ENCODE measurements at regions of chr10 and their contacts with region 1.

Region 1: DNA sequence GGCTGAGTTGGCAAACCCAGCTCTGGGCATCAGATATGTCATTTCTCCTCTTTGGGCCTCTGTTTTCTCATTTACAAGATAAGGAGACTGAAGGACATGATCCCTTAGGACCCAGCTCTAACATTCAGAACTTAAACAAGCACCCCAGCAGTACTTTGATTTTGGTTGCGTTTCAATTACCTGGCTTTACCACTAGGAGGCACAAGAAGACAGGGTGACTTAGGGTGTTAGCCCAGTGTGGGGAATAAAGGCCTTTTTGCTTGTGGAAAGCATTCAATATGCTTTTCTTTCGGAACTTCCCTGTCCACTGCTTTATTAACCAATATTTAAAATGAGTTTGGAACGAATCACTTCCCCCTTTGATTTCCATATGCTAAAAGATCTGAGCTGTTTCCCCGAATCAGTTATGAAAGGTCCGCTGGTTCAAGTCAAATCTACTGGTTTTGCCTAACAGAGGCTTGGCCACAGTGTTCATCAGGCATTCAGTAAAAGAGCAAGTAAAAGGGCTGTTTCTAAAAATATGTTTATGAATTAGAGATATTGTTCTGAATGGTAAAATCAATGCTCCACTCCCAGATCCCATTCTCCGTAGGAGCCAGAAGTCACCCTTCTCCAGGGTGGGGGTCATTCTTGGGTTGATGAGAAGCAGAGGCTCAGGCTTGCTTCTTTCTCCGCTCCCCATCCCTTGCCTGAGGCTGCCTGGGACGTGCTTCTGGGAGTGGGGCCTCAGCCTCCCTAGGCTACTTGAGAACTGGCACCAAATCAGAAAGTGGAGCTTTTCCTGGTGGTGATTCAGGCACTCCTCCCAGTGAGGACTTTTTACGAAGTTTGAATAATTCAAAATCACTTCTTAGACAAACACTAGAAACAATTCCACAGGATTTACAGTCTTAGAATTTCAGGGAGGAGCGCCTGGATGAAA is 105.5 kb downstream of the MYOF start:
- DNase-seq: peak; percentile 88
- H3K4me3 Mint-ChIP-seq: peak overlapping the region; percentile 55
- H3K27ac Mint-ChIP-seq: peak overlapping the region; percentile 87
- H3K4me1 Mint-ChIP-seq: peaks cover 40% of the 10 kb centered on the region
- H3K27me3 Mint-ChIP-seq: no peaks in the 10 kb centered on the region
- CTCF ChIP-seq: peak; percentile 85

Region 2: DNA sequence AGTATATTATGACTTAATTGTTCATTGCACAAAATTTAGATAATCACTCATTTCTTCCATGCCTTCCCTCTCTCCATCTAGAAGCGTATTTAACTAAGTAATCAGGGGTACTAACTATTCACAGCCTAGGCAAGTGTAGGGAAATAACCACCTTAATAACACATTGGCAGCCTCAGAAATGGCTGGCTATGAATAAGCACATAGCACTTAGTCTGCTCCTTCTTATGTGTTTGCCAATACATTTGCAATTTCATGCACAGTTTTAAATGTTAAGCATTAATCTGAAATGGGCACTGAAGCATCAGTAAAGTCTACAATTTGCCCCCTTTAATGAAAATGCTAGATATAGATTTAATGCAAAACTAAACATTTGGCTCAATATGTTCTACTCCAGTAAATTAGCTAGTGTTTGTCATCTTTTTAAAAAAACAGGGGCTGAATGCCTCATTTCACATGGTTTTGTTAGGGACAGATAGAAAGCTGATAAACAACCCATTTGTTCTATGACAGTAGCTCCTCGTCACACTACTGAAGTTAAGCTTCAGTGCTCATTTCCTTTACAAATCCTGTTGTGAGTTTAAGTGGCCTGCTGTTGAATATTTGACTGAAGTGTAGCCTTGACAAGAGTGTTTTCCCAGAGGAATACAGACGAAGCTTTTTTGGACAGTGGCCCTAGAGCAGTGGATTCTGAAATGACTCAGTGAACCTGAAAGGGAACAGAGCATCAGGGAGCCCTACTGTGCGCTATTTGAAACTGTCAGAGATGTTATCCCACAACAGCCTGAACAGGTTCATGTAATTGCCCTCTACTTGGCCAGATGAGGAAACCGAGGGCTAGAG is 656.4 kb before region 1 on chr10:
- CTCF ChIA-PET with region 1: no interaction called
- POLR2A ChIA-PET with region 1: no interaction called
- intact Hi-C with region 1: no loop called
- DNase-seq: no peak
- H3K4me3 Mint-ChIP-seq: no peak overlapping the region
- H3K27ac Mint-ChIP-seq: no peak overlapping the region
- H3K4me1 Mint-ChIP-seq: no peaks in the 10 kb centered on the region
- H3K27me3 Mint-ChIP-seq: no peaks in the 10 kb centered on the region
- CTCF ChIP-seq: no peak

Region 3: GRCh38 chr10:93352638-93353383 is 23.8 kb before region 1 on chr10:
- CTCF ChIA-PET with region 1: interaction called, 37 read pairs
- POLR2A ChIA-PET with region 1: no interaction called
- intact Hi-C with region 1: no loop called
- DNase-seq: peak; percentile 46
- H3K4me3 Mint-ChIP-seq: no peak overlapping the region
- H3K27ac Mint-ChIP-seq: no peak overlapping the region
- H3K4me1 Mint-ChIP-seq: no peaks in the 10 kb centered on the region
- H3K27me3 Mint-ChIP-seq: no peaks in the 10 kb centered on the region
- CTCF ChIP-seq: peak; percentile 51

Region 4: DNA sequence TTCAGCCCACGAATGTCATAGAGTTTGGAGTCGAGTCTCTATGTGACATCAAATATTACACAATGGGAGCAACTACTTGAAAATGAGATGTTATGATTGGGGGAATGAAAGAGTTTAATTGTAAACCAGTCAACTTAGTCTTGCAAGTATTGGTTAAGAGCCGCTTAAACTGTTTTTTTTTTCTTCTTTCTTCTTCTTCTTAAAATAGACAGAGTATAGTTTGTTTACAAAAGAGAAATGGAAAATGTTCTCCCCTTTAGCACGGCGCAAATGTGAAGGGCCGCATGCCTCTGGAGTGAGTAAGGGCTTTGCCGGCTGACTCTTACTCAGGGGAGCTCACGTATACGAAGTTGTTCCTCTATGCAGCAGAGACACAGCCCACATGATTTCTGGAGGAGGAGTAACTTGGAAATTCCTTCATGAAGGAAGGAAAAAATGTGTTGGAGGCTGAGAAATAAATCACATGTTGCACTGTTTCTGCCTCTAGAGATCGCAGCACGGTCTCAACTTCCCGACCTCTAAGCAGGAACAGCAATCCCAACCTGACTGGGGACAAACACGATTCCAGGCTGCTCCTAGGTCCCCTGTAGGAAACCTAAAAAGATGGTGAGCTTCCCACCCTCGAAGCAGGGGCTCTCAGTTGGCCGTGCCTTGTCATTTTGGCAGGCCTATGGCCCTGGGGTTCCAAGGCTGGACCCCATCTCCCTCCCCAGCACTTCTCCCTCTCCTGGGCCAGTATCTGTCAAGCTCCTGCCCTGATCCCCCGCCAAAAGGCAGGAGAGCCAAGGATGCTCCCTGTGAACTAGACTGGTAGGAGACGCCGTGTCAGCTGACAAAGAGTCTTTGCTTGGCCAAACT is 60.7 kb after region 1 on chr10:
- CTCF ChIA-PET with region 1: interaction called, 102 read pairs
- POLR2A ChIA-PET with region 1: interaction called, 49 read pairs
- intact Hi-C with region 1: loop called (anchors 1 kb)
- DNase-seq: peak; percentile 96
- H3K4me3 Mint-ChIP-seq: peak overlapping the region; percentile 70
- H3K27ac Mint-ChIP-seq: peak overlapping the region; percentile 98
- H3K4me1 Mint-ChIP-seq: peaks cover 65% of the 10 kb centered on the region
- H3K27me3 Mint-ChIP-seq: no peaks in the 10 kb centered on the region
- CTCF ChIP-seq: no peak

Region 5: GRCh38 chr10:93471110-93471651 is 94.5 kb after region 1 on chr10:
- CTCF ChIA-PET with region 1: interaction called, 74 read pairs
- POLR2A ChIA-PET with region 1: interaction called, 93 read pairs
- intact Hi-C with region 1: no loop called
- DNase-seq: peak; percentile 87
- H3K4me3 Mint-ChIP-seq: peak overlapping the region; percentile 44
- H3K27ac Mint-ChIP-seq: peak overlapping the region; percentile 85
- H3K4me1 Mint-ChIP-seq: peaks cover 50% of the 10 kb centered on the region
- H3K27me3 Mint-ChIP-seq: no peaks in the 10 kb centered on the region
- CTCF ChIP-seq: no peak

Region 6: GRCh38 chr10:93503075-93503474 is 126.4 kb after region 1 on chr10:
- CTCF ChIA-PET with region 1: interaction called, 29 read pairs
- POLR2A ChIA-PET with region 1: interaction called, 6 read pairs
- intact Hi-C with region 1: loop called (anchors 5 kb)
- DNase-seq: no peak
- H3K4me3 Mint-ChIP-seq: no peak overlapping the region
- H3K27ac Mint-ChIP-seq: no peak overlapping the region
- H3K4me1 Mint-ChIP-seq: peaks cover 27% of the 10 kb centered on the region
- H3K27me3 Mint-ChIP-seq: no peaks in the 10 kb centered on the region
- CTCF ChIP-seq: no peak

Region 7: GRCh38 chr10:93680412-93681047 is 303.9 kb after region 1 on chr10:
- CTCF ChIA-PET with region 1: no interaction called
- POLR2A ChIA-PET with region 1: interaction called, 3 read pairs
- intact Hi-C with region 1: loop called (anchors 5 kb)
- DNase-seq: peak; percentile 55
- H3K4me3 Mint-ChIP-seq: no peak overlapping the region
- H3K27ac Mint-ChIP-seq: no peak overlapping the region
- H3K4me1 Mint-ChIP-seq: no peaks in the 10 kb centered on the region
- H3K27me3 Mint-ChIP-seq: no peaks in the 10 kb centered on the region
- CTCF ChIP-seq: peak; percentile 60

Measured in MCF 10A (cell line).